CD8-positive, alpha-beta T cell (primary cell): ENCODE measurements at regions of chr17 and their contacts with region 1.

Region 1: GRCh38 chr17:45428050-45428617 is 4.5 kb downstream of the ARHGAP27 start:
- DNase-seq: peak; percentile 65 to 91 (median 77)
- ATAC-seq: peak; percentile 82
- H3K4me3 ChIP-seq: no peak overlapping the region
- H3K4me3 Mint-ChIP-seq: peak overlapping the region; percentile 66
- H3K27ac ChIP-seq: peak overlapping the region in 1 of 2 experiments; percentile 0
- H3K27ac Mint-ChIP-seq: peak overlapping the region; percentile 45
- H3K4me1 ChIP-seq: peaks cover 20% of the 10 kb centered on the region
- H3K4me1 Mint-ChIP-seq: peaks cover 22% of the 10 kb centered on the region
- H3K27me3 ChIP-seq: no peaks in the 10 kb centered on the region
- H3K27me3 Mint-ChIP-seq: no peaks in the 10 kb centered on the region
- CTCF ChIP-seq: peak; percentile 98

Region 2: GRCh38 chr17:45377401-45377800 is 50.7 kb before region 1 on chr17:
- CTCF ChIA-PET with region 1: no interaction called
- POLR2A ChIA-PET with region 1: no interaction called
- intact Hi-C with region 1: no loop called
- DNase-seq: no peak
- ATAC-seq: no peak
- H3K4me3 ChIP-seq: no peak overlapping the region
- H3K4me3 Mint-ChIP-seq: no peak overlapping the region
- H3K27ac ChIP-seq: no peak overlapping the region
- H3K27ac Mint-ChIP-seq: no peak overlapping the region
- H3K4me1 ChIP-seq: no peaks in the 10 kb centered on the region
- H3K4me1 Mint-ChIP-seq: no peaks in the 10 kb centered on the region
- H3K27me3 ChIP-seq: peaks cover 0 to 2% of the 10 kb centered on the region in 2 experiments
- H3K27me3 Mint-ChIP-seq: peaks cover 3% of the 10 kb centered on the region
- CTCF ChIP-seq: no peak

Region 3: GRCh38 chr17:45410144-45411091 is 17.7 kb before region 1 on chr17:
- CTCF ChIA-PET with region 1: interaction called, 4 read pairs
- POLR2A ChIA-PET with region 1: no interaction called
- intact Hi-C with region 1: loop called (anchors 1 to 2 kb)
- DNase-seq: peak in 8 of 9 experiments; percentile 52 to 81 (median 64)
- ATAC-seq: peak; percentile 86
- H3K4me3 ChIP-seq: peak overlapping the region; percentile 100
- H3K4me3 Mint-ChIP-seq: peak overlapping the region; percentile 99
- H3K27ac ChIP-seq: peak overlapping the region; percentile 85 to 94
- H3K27ac Mint-ChIP-seq: peak overlapping the region; percentile 99
- H3K4me1 ChIP-seq: peaks cover 42% of the 10 kb centered on the region
- H3K4me1 Mint-ChIP-seq: peaks cover 48% of the 10 kb centered on the region
- H3K27me3 ChIP-seq: no peaks in the 10 kb centered on the region
- H3K27me3 Mint-ChIP-seq: no peaks in the 10 kb centered on the region
- CTCF ChIP-seq: no peak